ENCODE measurements at regions of chr1 and their contacts with region 1.

Region 1: GRCh38 chr1:110619412-110620249 is 13.5 kb upstream of the KCNA2 start:
- DNase-seq: peak; percentile 93
- H3K4me3 Mint-ChIP-seq: peak overlapping the region; percentile 74
- H3K27ac Mint-ChIP-seq: peak overlapping the region; percentile 83
- H3K4me1 Mint-ChIP-seq: peaks cover 60% of the 10 kb centered on the region
- H3K27me3 Mint-ChIP-seq: no peaks in the 10 kb centered on the region

Region 2: DNA sequence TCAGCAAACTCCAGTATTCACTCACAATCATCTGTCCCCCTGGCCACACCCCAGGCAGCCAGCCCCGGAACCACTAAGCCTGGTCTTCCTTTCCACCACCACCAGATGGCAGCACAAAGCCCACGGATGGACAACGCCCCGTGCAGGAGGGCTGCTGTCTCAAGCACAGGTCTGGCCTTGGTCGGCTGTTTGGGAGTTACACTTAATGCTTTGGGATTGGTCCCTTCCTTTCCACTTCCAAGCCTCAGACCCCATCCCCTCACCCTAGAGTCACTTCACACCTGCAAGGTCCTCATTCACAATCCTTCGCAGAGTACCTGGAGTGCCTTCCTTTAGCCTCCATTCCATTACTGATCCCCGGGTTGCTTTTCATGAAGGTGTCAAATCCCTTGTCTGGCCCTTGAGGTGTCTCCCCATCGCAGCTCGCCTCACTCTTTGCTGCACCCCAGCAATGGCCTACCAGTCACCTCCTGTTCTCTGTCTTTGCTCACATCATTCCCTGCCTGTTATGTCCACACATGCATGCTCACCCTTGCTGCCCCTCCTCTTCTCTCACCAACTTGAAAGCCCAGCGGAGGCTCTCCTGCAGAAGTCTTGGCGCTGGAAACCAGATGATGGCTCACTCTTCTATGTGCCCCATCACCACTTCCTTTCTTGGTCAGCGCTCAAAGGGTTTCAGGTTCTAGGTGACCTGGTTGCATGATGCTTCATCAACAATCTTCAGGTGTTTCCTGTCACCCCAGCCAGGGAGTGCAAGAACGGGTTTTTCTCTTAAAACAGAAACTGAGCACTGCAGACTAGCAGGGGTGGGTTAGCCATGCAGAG is 11.4 kb after region 1 on chr1:
- CTCF ChIA-PET with region 1: interaction called, 42 read pairs
- POLR2A ChIA-PET with region 1: interaction called, 53 read pairs
- DNase-seq: peak; percentile 92
- H3K4me3 Mint-ChIP-seq: no peak overlapping the region
- H3K27ac Mint-ChIP-seq: no peak overlapping the region
- H3K4me1 Mint-ChIP-seq: peaks cover 68% of the 10 kb centered on the region
- H3K27me3 Mint-ChIP-seq: no peaks in the 10 kb centered on the region

Region 3: DNA sequence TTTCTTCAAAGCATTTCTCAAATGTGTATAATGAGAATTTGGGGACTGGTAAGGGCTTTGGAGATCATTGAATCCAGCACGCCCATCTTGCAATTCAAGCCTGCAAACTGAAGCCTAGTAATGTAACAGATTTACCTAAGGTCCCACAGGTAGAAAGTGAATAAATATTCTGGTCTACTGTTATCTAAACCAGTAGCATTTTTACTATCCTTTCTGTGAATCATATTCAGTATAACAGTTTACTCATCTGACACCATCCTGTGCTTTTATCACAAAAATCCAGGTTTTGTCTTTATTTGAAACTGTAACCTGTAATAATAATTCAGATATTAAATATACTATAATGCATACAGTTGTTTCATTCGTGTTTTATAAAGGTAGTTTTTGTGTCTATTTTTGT is 37.7 kb after region 1 on chr1:
- CTCF ChIA-PET with region 1: no interaction called
- POLR2A ChIA-PET with region 1: interaction called, 11 read pairs
- DNase-seq: no peak
- H3K4me3 Mint-ChIP-seq: no peak overlapping the region
- H3K27ac Mint-ChIP-seq: no peak overlapping the region
- H3K4me1 Mint-ChIP-seq: peaks cover 44% of the 10 kb centered on the region
- H3K27me3 Mint-ChIP-seq: no peaks in the 10 kb centered on the region

Region 4: GRCh38 chr1:110686188-110686587 is 66.6 kb after region 1 on chr1:
- CTCF ChIA-PET with region 1: interaction called, 14 read pairs
- POLR2A ChIA-PET with region 1: interaction called, 3 read pairs
- DNase-seq: peak; percentile 21
- H3K4me3 Mint-ChIP-seq: no peak overlapping the region
- H3K27ac Mint-ChIP-seq: no peak overlapping the region
- H3K4me1 Mint-ChIP-seq: peaks cover 2% of the 10 kb centered on the region
- H3K27me3 Mint-ChIP-seq: peaks cover 3% of the 10 kb centered on the region

Region 5: GRCh38 chr1:110774398-110774797 is 154.8 kb after region 1 on chr1:
- CTCF ChIA-PET with region 1: interaction called, 135 read pairs
- POLR2A ChIA-PET with region 1: interaction called, 9 read pairs
- DNase-seq: no peak
- H3K4me3 Mint-ChIP-seq: no peak overlapping the region
- H3K27ac Mint-ChIP-seq: no peak overlapping the region
- H3K4me1 Mint-ChIP-seq: peaks cover 4% of the 10 kb centered on the region
- H3K27me3 Mint-ChIP-seq: peaks cover 17% of the 10 kb centered on the region

Measured in activated CD4-positive, alpha-beta memory T cell treated with anti-CD3 and anti-CD28 coated beads, Interleukin-2, amount 10 ng/mL, durations not matched to agents 7 days and 5 days (primary cell).